Posterior vena cava (tissue), 2 donors: ENCODE measurements at regions of chrX and their contacts with region 1.

Region 1: GRCh38 chrX:13734278-13735172 is at the starts of genes OFD1 and TRAPPC2:
- DNase-seq: peak; percentile 97
- total RNA-seq, gene OFD1: 18.2 to 19.9 TPM
- total RNA-seq, gene TRAPPC2: 15.0 to 15.8 TPM

Region 2: GRCh38 chrX:13658602-13659001 is 75.9 kb before region 1 on chrX:
- intact Hi-C with region 1: loop called (anchors 5 to 10 kb)
- DNase-seq: no peak

Region 3: DNA sequence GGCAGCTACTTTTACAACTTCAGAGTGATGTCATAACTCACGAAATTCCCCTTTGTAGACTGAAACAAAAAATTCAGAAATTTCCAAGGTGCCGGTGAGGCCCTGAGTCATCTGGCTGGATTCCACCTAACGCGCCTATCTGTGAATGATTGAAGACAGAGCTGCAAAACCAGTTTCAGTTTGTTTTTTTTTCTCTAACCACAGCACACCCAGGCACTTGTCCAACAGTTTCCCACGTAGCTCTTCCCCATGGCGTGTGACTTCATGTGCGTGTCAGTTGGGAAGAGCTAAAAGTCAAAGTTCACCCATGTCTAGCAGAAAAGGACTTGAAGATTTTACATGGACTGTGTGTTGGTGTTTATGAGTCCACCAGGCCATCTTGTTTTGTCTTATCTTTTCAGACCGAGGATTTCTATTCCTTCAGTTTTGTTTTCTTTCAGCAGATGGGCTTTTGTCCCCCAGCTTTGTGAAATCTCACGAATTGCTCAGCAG is 65.2 kb before region 1 on chrX:
- intact Hi-C with region 1: loop called in 1 of 2 experiments (anchors 10 kb)
- DNase-seq: no peak